ENCODE measurements at regions of chr12 and their contacts with region 1.

Region 1: DNA sequence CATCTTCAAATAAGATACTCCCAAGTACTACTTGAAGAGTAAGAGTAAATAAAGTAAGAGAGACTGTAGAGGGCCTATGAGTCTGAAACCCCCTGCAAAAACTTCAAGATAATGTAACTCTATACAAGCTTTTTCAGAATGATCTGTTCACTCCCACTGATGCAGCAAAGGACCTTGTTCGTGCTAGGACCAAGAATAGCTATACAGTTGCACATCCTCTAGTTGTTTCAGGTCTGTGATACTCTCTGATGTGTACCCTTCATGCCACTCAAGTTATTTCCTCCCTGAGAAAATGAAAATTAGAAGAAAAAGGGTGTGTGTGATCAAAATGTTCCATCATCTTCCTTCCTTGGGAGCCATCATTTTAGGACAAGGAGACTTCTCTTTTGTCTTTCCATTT is 204.4 kb downstream of the ALX1 start:
- DNase-seq: no peak
- ATAC-seq: peak; percentile 56
- H3K4me3 ChIP-seq: no peak overlapping the region
- H3K27ac ChIP-seq: no peak overlapping the region
- H3K4me1 ChIP-seq: no peaks in the 10 kb centered on the region
- H3K27me3 ChIP-seq: no peaks in the 10 kb centered on the region
- CTCF ChIP-seq: no peak
- EP300 ChIP-seq: no peak
- POLR2A ChIP-seq: no peak
- RAD21 ChIP-seq: no peak

Region 2: GRCh38 chr12:85509857-85510256 is 25.5 kb after region 1 on chr12:
- CTCF ChIA-PET with region 1: interaction called, 4 read pairs
- POLR2A ChIA-PET with region 1: no interaction called
- RAD21 ChIA-PET with region 1: no interaction called
- SMC1A ChIA-PET with region 1: interaction called, 3 read pairs
- in situ Hi-C with region 1: no loop called
- intact Hi-C with region 1: loop called (anchors 1 kb)
- DNase-seq: peak; percentile 30
- ATAC-seq: peak; percentile 98
- H3K4me3 ChIP-seq: no peak overlapping the region
- H3K27ac ChIP-seq: no peak overlapping the region
- H3K4me1 ChIP-seq: peaks cover 9% of the 10 kb centered on the region
- H3K27me3 ChIP-seq: no peaks in the 10 kb centered on the region
- CTCF ChIP-seq: no peak
- EP300 ChIP-seq: 0 out of 4 replicates have a peak, but pooled peaks of 1 of the 2 experiments have one; percentile 31
- POLR2A ChIP-seq: no peak
- RAD21 ChIP-seq: no peak